ENCODE measurements at regions of chr18 and their contacts with region 1.

Region 1: DNA sequence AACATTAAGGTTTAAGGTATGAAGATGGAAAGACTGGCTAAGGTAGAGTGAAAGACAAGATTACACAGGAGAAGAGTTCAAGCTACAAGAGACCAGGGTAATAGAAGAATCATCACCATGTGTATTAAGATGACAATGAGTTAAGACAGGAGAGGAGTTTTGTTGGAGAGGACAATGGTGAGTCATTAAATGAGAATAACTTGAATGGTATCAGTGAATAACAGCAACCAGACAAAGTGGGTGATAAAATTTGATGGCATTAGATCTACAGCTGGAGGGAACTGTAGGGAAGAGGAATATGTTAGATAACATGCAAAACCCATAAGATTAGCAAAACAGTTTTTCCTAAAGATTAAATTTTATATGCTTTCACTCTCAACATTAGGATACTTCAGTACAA is 18.8 kb upstream of the ENOSF1 start:
- DNase-seq: no peak
- H3K4me3 ChIP-seq: no peak overlapping the region
- H3K27ac ChIP-seq: no peak overlapping the region
- H3K4me1 ChIP-seq: no peaks in the 10 kb centered on the region
- H3K27me3 ChIP-seq: no peaks in the 10 kb centered on the region
- CTCF ChIP-seq: no peak
- POLR2A ChIP-seq: no peak

Region 2: DNA sequence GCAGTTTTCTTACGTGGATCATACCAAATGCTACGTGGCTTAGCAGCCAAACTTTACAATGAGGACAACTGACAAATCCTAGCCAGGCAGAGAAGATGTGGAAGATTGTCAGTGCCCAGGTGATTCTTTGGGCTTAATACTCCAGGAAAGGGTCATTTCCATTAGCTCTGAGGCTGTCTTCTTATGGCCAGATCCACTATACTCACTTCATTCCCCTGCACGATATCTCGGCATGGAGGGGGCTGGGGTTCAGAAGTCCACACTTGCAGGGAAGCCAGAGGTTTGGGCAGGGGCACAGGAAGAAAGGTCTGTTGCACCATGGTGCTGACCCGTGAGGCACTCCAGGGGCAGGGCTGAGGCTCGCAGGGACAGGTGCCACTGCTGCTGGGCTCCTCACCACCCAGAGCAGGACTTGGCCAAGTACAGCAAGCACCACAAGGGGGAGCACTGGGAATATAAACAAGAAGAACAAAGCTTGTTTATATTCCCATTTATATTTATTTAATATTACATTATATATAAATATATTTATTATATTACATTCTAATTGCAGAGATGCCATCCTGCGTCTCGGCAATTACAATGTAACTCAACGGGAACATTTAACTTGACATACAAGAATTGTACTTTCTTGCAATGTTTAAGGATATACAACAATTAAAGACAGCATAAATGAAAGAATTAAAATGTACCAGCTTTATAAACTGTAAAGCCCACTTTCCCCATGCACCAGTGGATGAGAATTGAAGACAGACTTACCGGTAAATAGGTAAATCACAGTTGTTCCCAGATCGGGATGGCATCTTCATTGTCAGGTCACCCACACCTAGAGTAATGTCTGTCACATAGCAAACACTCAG is 107.2 kb before region 1 on chr18:
- intact Hi-C with region 1: loop called (anchors 10 kb)
- DNase-seq: no peak
- H3K4me3 ChIP-seq: no peak overlapping the region
- H3K27ac ChIP-seq: no peak overlapping the region
- H3K4me1 ChIP-seq: no peaks in the 10 kb centered on the region
- H3K27me3 ChIP-seq: no peaks in the 10 kb centered on the region
- CTCF ChIP-seq: peak; percentile 23 to 70 (median 48)
- POLR2A ChIP-seq: no peak

Region 3: GRCh38 chr18:805008-805754 is 74.0 kb after region 1 on chr18:
- intact Hi-C with region 1: no loop called
- DNase-seq: no peak
- H3K4me3 ChIP-seq: peak overlapping the region in 1 of 4 donors; percentile 23
- H3K27ac ChIP-seq: peak overlapping the region in 1 of 4 donors; percentile 16
- H3K4me1 ChIP-seq: peaks cover 0 to 60% (median 12%) of the 10 kb centered on the region in 3 donors
- H3K27me3 ChIP-seq: no peaks in the 10 kb centered on the region
- CTCF ChIP-seq: no peak
- POLR2A ChIP-seq: no peak